Tibial artery (tissue), 4 donors: ENCODE measurements at regions of chr16 and their contacts with region 1.

Region 1: GRCh38 chr16:72410492-72410891 is 238.5 kb upstream of the PMFBP1 start:
- DNase-seq: no peak
- H3K4me3 ChIP-seq: no peak overlapping the region
- H3K27ac ChIP-seq: no peak overlapping the region
- H3K4me1 ChIP-seq: no peaks in the 10 kb centered on the region
- H3K27me3 ChIP-seq: no peaks in the 10 kb centered on the region
- CTCF ChIP-seq: no peak

Region 2: DNA sequence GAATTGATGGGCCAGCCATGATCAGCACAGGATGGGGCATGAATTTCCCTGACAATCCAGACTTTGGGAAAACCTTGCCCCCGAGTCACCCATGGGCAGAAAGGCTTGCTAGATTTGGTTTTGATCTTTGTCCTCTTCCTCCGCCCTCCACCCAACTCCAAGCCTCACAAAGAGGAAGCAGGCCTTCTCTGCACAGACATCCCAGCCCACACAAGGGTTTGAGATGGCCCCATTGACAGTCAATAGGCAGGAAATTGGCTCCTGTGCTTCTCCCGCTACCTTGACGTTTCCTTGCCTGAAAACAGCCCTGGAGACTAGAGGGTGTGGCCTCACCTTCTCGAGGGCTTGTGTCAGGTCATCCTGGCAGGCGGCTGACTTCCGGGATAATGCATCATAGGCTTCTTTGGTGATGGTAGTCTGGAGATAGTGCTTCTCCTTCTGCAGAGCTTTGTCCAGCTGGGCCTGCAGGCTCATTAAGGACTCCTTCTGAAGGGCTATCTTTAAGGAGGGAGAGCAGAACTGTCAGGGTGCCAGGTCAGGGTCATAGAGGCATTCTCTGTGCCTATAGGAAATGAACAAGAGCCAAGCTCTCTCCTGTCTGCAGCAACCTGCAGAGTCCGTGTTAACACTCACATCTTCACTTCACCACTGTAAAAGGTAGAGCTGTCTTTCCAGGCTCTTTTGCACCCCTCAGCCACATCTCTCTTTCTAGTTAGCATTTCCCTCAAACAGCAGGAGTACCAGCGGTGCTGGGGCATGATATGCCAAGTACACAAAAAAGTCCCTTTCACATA is 284.7 kb before region 1 on chr16:
- intact Hi-C with region 1: no loop called
- DNase-seq: no peak
- H3K4me3 ChIP-seq: no peak overlapping the region
- H3K27ac ChIP-seq: no peak overlapping the region
- H3K4me1 ChIP-seq: no peaks in the 10 kb centered on the region
- H3K27me3 ChIP-seq: no peaks in the 10 kb centered on the region
- CTCF ChIP-seq: no peak

Region 3: GRCh38 chr16:72324578-72324977 is 85.9 kb before region 1 on chr16:
- intact Hi-C with region 1: no loop called
- DNase-seq: no peak
- H3K4me3 ChIP-seq: no peak overlapping the region
- H3K27ac ChIP-seq: no peak overlapping the region
- H3K4me1 ChIP-seq: no peaks in the 10 kb centered on the region
- H3K27me3 ChIP-seq: no peaks in the 10 kb centered on the region
- CTCF ChIP-seq: no peak

Region 4: DNA sequence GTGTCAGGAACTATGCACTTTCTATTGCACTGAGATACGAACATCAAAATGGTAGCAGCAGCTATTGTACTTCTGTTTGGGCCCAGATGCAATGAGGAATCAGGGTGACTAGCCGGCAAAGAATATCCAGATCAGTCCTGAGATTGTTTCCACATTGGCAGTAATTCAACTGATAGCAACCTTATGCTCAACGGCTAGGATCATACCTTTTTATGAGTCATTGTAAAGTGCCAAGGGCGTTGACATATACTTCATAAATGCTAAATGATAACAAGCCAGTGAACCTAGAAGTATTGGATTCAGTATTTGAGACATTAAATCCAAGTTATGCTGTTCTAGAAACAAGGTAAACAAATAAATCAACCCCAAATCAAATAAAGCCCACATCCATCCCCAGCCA is 844.5 kb after region 1 on chr16:
- intact Hi-C with region 1: loop called (anchors 10 kb)
- DNase-seq: no peak
- H3K4me3 ChIP-seq: no peak overlapping the region
- H3K27ac ChIP-seq: no peak overlapping the region
- H3K4me1 ChIP-seq: peaks cover 0 to 6% (median 0%) of the 10 kb centered on the region in 4 donors
- H3K27me3 ChIP-seq: no peaks in the 10 kb centered on the region
- CTCF ChIP-seq: no peak